ENCODE measurements at regions of chr15 and their contacts with region 1.

Region 1: GRCh38 chr15:92011611-92012367 is 158.3 kb downstream of the SLCO3A1 start:
- DNase-seq: peak; percentile 65
- H3K4me3 Mint-ChIP-seq: peak overlapping the region; percentile 51
- H3K27ac Mint-ChIP-seq: peak overlapping the region; percentile 72
- H3K4me1 Mint-ChIP-seq: peaks cover 65% of the 10 kb centered on the region
- H3K27me3 Mint-ChIP-seq: no peaks in the 10 kb centered on the region

Region 2: DNA sequence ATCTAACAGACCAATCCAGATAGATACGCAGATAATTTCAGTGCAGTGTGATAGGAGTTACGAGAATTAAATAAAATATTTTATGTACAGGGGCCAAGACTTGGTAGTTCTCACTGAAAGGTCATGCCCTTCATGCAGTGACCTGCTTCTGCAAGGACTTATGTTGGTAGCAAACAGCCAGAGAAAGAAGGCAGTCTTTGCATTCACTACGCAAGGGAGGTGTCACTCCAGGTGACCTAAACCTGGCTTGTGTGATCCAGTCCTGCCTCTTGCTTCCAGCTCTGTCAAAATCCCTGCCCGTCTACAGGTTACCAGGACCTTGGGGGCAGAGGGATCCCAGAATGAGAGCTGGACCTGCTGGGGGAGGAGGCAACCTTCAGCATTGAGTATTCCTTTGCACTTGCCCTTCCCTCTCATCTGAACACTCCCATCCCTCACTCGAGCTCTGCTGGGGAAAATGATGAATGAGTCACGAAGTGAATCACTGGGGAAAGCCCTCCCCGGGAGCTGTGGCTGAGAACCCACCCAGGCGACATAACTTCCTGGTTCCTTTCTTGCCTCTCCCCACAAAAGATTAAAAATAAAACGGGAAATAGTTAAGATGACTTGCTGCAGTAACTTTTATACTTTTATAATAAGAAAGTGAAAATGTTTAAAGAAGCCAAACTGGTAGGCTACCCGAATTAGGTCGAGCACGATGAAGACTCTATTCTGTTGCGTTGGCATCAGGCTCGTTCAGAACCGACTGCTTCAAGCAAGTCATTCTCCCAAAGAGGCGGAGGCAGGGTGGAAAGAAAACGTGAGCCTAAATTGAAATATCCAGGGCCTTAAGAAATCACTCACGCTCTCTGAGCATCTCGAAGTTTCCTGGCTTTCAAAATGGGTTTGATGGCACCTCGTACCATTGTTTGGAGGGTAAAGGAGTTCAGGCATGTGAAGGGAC is 57.8 kb after region 1 on chr15:
- CTCF ChIA-PET with region 1: no interaction called
- intact Hi-C with region 1: loop called (anchors 1 kb)
- DNase-seq: peak; percentile 78
- H3K4me3 Mint-ChIP-seq: peak overlapping the region; percentile 52
- H3K27ac Mint-ChIP-seq: peak overlapping the region; percentile 73
- H3K4me1 Mint-ChIP-seq: peaks cover 47% of the 10 kb centered on the region
- H3K27me3 Mint-ChIP-seq: no peaks in the 10 kb centered on the region

Region 3: GRCh38 chr15:92158434-92158833 is 146.6 kb after region 1 on chr15:
- CTCF ChIA-PET with region 1: no interaction called
- intact Hi-C with region 1: loop called (anchors 1 kb)
- DNase-seq: peak; percentile 83
- H3K4me3 Mint-ChIP-seq: no peak overlapping the region
- H3K27ac Mint-ChIP-seq: no peak overlapping the region
- H3K4me1 Mint-ChIP-seq: peaks cover 26% of the 10 kb centered on the region
- H3K27me3 Mint-ChIP-seq: no peaks in the 10 kb centered on the region